ENCODE measurements at regions of chr20 and their contacts with region 1.

Region 1: DNA sequence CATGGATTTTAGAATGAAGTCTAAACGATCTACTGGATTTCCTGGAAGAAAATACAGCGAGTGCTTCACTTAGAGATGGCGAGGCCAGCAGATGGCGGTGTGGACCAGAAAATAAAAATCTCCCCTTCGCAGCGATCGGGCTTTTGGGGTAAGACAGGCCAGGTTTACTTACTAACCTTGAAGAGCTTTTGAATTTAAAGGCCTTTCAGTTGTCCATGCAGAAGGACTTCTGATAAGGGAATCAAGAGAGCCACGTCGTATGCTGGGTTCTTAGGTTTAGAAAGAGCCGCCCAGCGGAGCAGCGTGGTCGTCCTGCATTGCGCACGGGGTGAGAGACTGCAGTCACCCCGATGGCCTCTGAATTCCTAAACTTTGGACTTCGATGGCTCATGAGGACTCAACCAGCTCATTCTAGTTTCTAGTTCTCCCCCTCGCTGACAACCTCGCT is 125.2 kb upstream of the RALGAPA2 start:
- DNase-seq: peak in 1 of 2 donors; percentile 22
- ATAC-seq: peak; percentile 42 to 68
- H3K4me3 ChIP-seq: peak overlapping the region; percentile 21 to 39 (median 35)
- H3K27ac ChIP-seq: no peak overlapping the region
- H3K4me1 ChIP-seq: peaks cover 0 to 7% of the 10 kb centered on the region in 2 donors
- H3K27me3 ChIP-seq: no peaks in the 10 kb centered on the region
- CTCF ChIP-seq: peak; percentile 55 to 73 (median 64)
- POLR2A ChIP-seq: no peak

Region 2: GRCh38 chr20:21571841-21572690 is 734.5 kb after region 1 on chr20:
- in situ Hi-C with region 1: no loop called
- intact Hi-C with region 1: loop called (anchors 5 kb)
- DNase-seq: no peak
- ATAC-seq: no peak
- H3K4me3 ChIP-seq: no peak overlapping the region
- H3K27ac ChIP-seq: no peak overlapping the region
- H3K4me1 ChIP-seq: no peaks in the 10 kb centered on the region
- H3K27me3 ChIP-seq: peaks cover 0 to 2% (median 0%) of the 10 kb centered on the region in 3 donors
- CTCF ChIP-seq: peak; percentile 57 to 83 (median 74)
- POLR2A ChIP-seq: no peak

Measured in gastrocnemius medialis (tissue), 4 donors.